HepG2 (cell line): ENCODE measurements at regions of chr12 and their contacts with region 1.

Region 1: GRCh38 chr12:27733052-27733656 is 22.5 kb downstream of the MRPS35 start:
- DNase-seq: peak; percentile 10
- ATAC-seq: peak; percentile 66
- H3K4me3 ChIP-seq: no peak overlapping the region
- H3K27ac ChIP-seq: no peak overlapping the region
- H3K4me1 ChIP-seq: no peaks in the 10 kb centered on the region
- H3K27me3 ChIP-seq: no peaks in the 10 kb centered on the region
- CTCF ChIP-seq: peak; percentile 79
- EP300 ChIP-seq: no peak
- POLR2A ChIP-seq: no peak
- RAD21 ChIP-seq: peak; percentile 61; the same call in 1 of the 2 replicates

Region 2: DNA sequence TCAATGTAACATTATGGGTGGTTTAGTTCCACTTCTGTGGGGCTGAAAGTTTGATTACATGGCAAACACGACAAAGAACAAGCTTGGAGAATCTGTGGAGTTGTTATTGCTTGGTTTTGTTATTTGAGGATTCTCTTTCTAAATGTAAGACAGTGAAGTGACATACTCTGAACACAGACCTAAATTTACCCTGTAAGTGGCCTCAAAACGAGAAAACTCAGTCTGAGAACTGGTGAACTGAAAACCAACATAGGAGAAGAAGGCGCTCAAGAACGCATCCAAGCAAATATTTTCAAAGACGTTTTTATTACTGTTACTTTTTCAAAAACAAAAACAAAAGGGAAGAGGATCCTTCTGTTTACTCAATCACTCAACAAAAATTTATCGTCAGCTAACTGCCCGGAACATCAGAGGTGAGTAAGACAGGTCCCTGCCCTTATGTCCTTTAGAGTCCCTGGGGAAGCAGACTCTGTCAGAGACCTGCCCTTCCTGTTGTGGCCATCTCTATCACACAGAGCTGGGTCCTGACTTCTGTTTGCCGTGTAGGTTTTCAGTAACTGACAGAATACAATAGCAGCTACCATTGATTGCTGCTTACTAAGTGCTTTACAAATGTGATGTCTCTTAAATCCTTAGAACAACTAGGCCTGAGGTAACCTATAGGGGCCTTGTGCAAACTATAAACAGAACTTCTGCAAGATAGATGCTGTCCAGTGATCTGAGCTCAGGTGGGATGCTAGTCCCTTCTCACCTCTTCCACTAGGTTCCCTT is 571.5 kb before region 1 on chr12:
- CTCF ChIA-PET with region 1: no interaction called
- POLR2A ChIA-PET with region 1: no interaction called
- in situ Hi-C with region 1: no loop called
- intact Hi-C with region 1: no loop called
- DNase-seq: no peak
- ATAC-seq: peak; percentile 73; the same call in 2 of the 3 replicates
- H3K4me3 ChIP-seq: no peak overlapping the region
- H3K27ac ChIP-seq: no peak overlapping the region
- H3K4me1 ChIP-seq: peaks cover 5% of the 10 kb centered on the region; the same call in 1 of the 2 replicates
- H3K27me3 ChIP-seq: peaks cover 0 to 3% of the 10 kb centered on the region in 2 experiments; a peak in 2 of 5 replicates
- CTCF ChIP-seq: no peak
- EP300 ChIP-seq: no peak
- POLR2A ChIP-seq: no peak
- RAD21 ChIP-seq: no peak

Region 3: GRCh38 chr12:27627123-27627835 is 105.9 kb before region 1 on chr12:
- CTCF ChIA-PET with region 1: no interaction called
- POLR2A ChIA-PET with region 1: no interaction called
- in situ Hi-C with region 1: no loop called
- intact Hi-C with region 1: no loop called
- DNase-seq: no peak
- ATAC-seq: no peak
- H3K4me3 ChIP-seq: no peak overlapping the region
- H3K27ac ChIP-seq: no peak overlapping the region
- H3K4me1 ChIP-seq: peaks cover 12% of the 10 kb centered on the region
- H3K27me3 ChIP-seq: no peaks in the 10 kb centered on the region
- CTCF ChIP-seq: no peak
- EP300 ChIP-seq: no peak
- POLR2A ChIP-seq: no peak
- RAD21 ChIP-seq: no peak

Region 4: GRCh38 chr12:27710592-27711316 is 22.4 kb before region 1 on chr12 and contains the start of gene MRPS35:
- CTCF ChIA-PET with region 1: no interaction called
- POLR2A ChIA-PET with region 1: no interaction called
- in situ Hi-C with region 1: no loop called
- intact Hi-C with region 1: loop called (anchors 2 kb)
- DNase-seq: peak; percentile 72
- ATAC-seq: peak; percentile 97
- H3K4me3 ChIP-seq: peak within 1 kb of the TSS; percentile 72 to 94 (median 90)
- H3K27ac ChIP-seq: peak within 1 kb of the TSS; percentile 82
- H3K4me1 ChIP-seq: peaks cover 42% of the 10 kb centered on the region
- H3K27me3 ChIP-seq: peaks cover 0 to 3% of the 10 kb centered on the region in 2 experiments; a peak in 1 of 5 replicates
- CTCF ChIP-seq: peak; percentile 41
- EP300 ChIP-seq: no peak
- POLR2A ChIP-seq: peak; percentile 94 to 95
- RAD21 ChIP-seq: peak; percentile 36; the same call in 1 of the 2 replicates
- total RNA-seq, gene MRPS35: 104 and 160 TPM in 2 replicates

Region 5: GRCh38 chr12:27821259-27821973 is 88.3 kb after region 1 on chr12:
- CTCF ChIA-PET with region 1: interaction called, 12 read pairs
- POLR2A ChIA-PET with region 1: no interaction called
- in situ Hi-C with region 1: no loop called
- intact Hi-C with region 1: loop called (anchors 1 kb)
- DNase-seq: peak; percentile 67
- ATAC-seq: peak; percentile 73
- H3K4me3 ChIP-seq: no peak overlapping the region
- H3K27ac ChIP-seq: no peak overlapping the region
- H3K4me1 ChIP-seq: peaks cover 33% of the 10 kb centered on the region
- H3K27me3 ChIP-seq: no peaks in the 10 kb centered on the region; a peak in 2 of 5 replicates
- CTCF ChIP-seq: peak; percentile 69
- EP300 ChIP-seq: no peak
- POLR2A ChIP-seq: no peak
- RAD21 ChIP-seq: no peak

Region 6: GRCh38 chr12:27840244-27840999 is 107.3 kb after region 1 on chr12:
- CTCF ChIA-PET with region 1: no interaction called
- POLR2A ChIA-PET with region 1: no interaction called
- in situ Hi-C with region 1: no loop called
- intact Hi-C with region 1: loop called (anchors 5 kb)
- DNase-seq: no peak
- ATAC-seq: no peak
- H3K4me3 ChIP-seq: no peak overlapping the region
- H3K27ac ChIP-seq: no peak overlapping the region
- H3K4me1 ChIP-seq: peaks cover 29% of the 10 kb centered on the region
- H3K27me3 ChIP-seq: no peaks in the 10 kb centered on the region; a peak in 1 of 5 replicates
- CTCF ChIP-seq: no peak
- EP300 ChIP-seq: no peak
- POLR2A ChIP-seq: no peak
- RAD21 ChIP-seq: no peak

Region 7: DNA sequence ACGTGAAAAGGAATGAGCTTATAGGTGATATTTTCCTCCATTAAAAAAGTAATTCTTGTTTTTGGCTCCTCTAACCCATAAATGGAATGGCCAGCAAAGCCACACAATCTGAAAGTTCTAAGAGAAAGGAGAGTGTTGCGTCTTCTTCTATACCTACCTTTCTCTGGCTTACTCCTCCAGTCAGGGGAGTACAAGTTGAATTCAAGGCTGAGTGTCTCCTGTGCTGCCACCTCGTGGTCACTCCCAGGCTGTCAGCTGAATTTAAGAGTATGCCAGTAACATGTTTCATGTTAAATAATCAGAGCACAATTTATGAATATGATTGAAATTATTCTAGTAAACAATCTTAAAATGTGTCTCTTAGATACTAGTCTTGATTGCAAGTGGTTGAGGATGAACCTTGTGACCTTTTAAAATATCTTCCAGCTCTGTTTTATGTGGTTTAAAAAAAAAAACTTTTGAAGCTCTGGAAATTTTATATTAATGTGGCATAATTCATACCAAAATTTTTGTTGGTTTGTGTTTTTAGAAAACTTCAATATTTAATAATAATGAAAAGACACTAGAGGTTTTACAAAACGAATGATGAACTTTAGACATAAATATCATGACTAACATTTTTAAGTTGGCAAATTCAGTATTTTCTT is 207.7 kb after region 1 on chr12:
- CTCF ChIA-PET with region 1: interaction called, 21 read pairs
- POLR2A ChIA-PET with region 1: no interaction called
- in situ Hi-C with region 1: loop called (anchors 10 kb)
- intact Hi-C with region 1: loop called (anchors 1 kb)
- DNase-seq: peak; percentile 65
- ATAC-seq: peak; percentile 88
- H3K4me3 ChIP-seq: no peak overlapping the region
- H3K27ac ChIP-seq: no peak overlapping the region
- H3K4me1 ChIP-seq: no peaks in the 10 kb centered on the region
- H3K27me3 ChIP-seq: no peaks in the 10 kb centered on the region
- CTCF ChIP-seq: peak; percentile 86
- EP300 ChIP-seq: no peak
- POLR2A ChIP-seq: no peak
- RAD21 ChIP-seq: peak; percentile 66; the same call in 1 of the 2 replicates

Region 8: GRCh38 chr12:28172434-28173030 is 439.4 kb after region 1 on chr12:
- CTCF ChIA-PET with region 1: interaction called, 10 read pairs
- POLR2A ChIA-PET with region 1: no interaction called
- in situ Hi-C with region 1: loop called (anchors 25 kb)
- intact Hi-C with region 1: no loop called
- DNase-seq: peak; percentile 39
- ATAC-seq: peak; percentile 85
- H3K4me3 ChIP-seq: no peak overlapping the region
- H3K27ac ChIP-seq: no peak overlapping the region
- H3K4me1 ChIP-seq: no peaks in the 10 kb centered on the region
- H3K27me3 ChIP-seq: no peaks in the 10 kb centered on the region
- CTCF ChIP-seq: peak; percentile 68
- EP300 ChIP-seq: no peak
- POLR2A ChIP-seq: no peak
- RAD21 ChIP-seq: peak; percentile 33; the same call in 1 of the 2 replicates

Region 9: GRCh38 chr12:28998637-28999120 is 1265.5 kb after region 1 on chr12:
- CTCF ChIA-PET with region 1: no interaction called
- POLR2A ChIA-PET with region 1: no interaction called
- in situ Hi-C with region 1: no loop called
- intact Hi-C with region 1: loop called (anchors 10 kb)
- DNase-seq: peak; percentile 3
- ATAC-seq: peak; percentile 68
- H3K4me3 ChIP-seq: no peak overlapping the region
- H3K27ac ChIP-seq: no peak overlapping the region
- H3K4me1 ChIP-seq: peaks cover 4% of the 10 kb centered on the region; the same call in 1 of the 2 replicates
- H3K27me3 ChIP-seq: no peaks in the 10 kb centered on the region
- CTCF ChIP-seq: peak; percentile 45
- EP300 ChIP-seq: no peak
- POLR2A ChIP-seq: no peak
- RAD21 ChIP-seq: no peak